ENCODE measurements at regions of chr20 and their contacts with region 1.

Region 1: GRCh38 chr20:37276494-37277252 is 12.8 kb upstream of the MANBAL start:
- DNase-seq: peak; percentile 59
- CTCF ChIP-seq: peak; percentile 57

Region 2: DNA sequence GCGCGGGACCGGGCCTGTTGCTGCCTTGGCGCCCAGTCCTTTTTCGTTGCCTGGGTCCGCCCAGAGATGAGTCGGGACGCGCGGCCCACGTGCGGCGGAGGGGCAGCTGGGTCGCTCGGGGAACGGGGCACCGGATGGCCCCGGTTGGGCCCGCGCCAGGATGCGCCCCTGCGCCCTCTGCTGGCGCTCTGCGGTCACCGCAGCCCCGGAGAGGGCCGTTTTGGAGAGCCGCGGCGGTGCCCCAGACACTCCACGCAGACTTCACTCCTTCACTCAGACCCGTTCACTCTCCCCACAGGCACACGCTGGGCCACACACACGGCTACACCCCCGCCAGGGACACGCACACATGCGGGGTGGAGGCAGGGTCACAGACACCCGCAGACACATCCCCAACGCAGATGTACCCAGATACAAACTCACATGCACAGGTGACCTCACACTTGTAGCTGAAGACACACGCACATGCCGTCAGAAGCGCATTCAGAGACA is 108.1 kb after region 1 on chr20:
- in situ Hi-C with region 1: loop called (anchors 10 kb)
- DNase-seq: peak; percentile 91
- CTCF ChIP-seq: peak; percentile 88